ENCODE measurements at regions of chr13 and their contacts with region 1.

Region 1: GRCh38 chr13:51286135-51287002 is 53.1 kb upstream of the SERPINE3 start:
- DNase-seq: peak; percentile 87
- ATAC-seq: peak; percentile 90
- H3K4me3 Mint-ChIP-seq: no peak overlapping the region
- H3K27ac Mint-ChIP-seq: no peak overlapping the region
- H3K4me1 Mint-ChIP-seq: peaks cover 2% of the 10 kb centered on the region
- H3K27me3 Mint-ChIP-seq: no peaks in the 10 kb centered on the region

Region 2: DNA sequence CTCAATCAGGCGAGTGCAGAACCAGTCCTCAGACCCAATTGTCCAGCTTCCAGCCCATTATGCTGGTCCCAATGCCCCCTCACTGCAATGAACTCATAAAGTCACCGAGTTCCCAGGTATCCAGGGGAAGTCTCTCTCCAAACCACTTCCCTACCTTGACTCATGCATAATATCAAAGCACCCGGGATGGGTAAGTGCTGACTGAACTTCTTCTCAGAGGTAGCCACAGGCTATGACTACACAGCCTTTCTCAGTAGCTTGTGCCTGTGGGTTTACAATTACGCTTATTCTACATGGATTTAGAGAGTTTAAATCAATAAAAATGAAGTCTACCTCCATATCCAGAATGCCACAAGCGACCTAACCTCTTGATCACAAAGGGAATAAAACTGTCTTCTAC is 173.6 kb before region 1 on chr13:
- CTCF ChIA-PET with region 1: interaction called, 11 read pairs
- POLR2A ChIA-PET with region 1: no interaction called
- intact Hi-C with region 1: no loop called
- DNase-seq: no peak
- ATAC-seq: peak; percentile 49
- H3K4me3 Mint-ChIP-seq: no peak overlapping the region
- H3K27ac Mint-ChIP-seq: no peak overlapping the region
- H3K4me1 Mint-ChIP-seq: no peaks in the 10 kb centered on the region
- H3K27me3 Mint-ChIP-seq: peaks cover 9% of the 10 kb centered on the region

Region 3: DNA sequence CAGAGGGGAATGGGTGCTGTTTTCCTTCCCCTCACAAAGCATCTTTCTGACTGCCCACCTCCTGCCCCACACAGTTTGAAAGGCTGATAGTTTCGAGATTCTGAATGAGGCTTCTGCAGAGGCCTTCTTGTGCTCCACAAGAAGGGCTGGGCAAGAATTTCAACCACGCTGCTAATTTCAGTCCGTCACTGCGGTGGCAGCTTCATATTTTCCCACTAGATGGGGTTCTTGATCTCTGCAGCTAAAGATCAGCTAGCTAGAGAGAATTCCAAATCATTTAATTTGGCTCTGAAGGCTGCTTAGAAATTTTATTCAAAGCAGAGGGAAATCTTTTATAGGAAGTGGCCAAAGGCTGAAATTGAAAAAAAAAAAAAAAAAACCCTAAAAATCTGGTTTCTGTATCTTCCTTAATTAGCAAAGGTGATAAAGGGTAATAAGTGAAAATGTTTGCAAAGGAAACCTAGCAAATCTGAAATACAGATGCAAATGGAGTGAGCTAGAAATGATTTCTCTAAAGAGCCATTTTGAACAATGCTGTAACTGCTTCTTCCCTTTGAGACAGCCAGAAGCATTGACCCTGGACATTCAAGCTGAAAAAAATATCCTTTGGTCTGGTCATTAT is 137.3 kb before region 1 on chr13:
- CTCF ChIA-PET with region 1: interaction called, 29 read pairs
- POLR2A ChIA-PET with region 1: no interaction called
- intact Hi-C with region 1: loop called in 1 of 2 experiments (anchors 1 kb)
- DNase-seq: peak; percentile 44
- ATAC-seq: no peak
- H3K4me3 Mint-ChIP-seq: no peak overlapping the region
- H3K27ac Mint-ChIP-seq: no peak overlapping the region
- H3K4me1 Mint-ChIP-seq: peaks cover 10% of the 10 kb centered on the region
- H3K27me3 Mint-ChIP-seq: peaks cover 19% of the 10 kb centered on the region

Region 4: DNA sequence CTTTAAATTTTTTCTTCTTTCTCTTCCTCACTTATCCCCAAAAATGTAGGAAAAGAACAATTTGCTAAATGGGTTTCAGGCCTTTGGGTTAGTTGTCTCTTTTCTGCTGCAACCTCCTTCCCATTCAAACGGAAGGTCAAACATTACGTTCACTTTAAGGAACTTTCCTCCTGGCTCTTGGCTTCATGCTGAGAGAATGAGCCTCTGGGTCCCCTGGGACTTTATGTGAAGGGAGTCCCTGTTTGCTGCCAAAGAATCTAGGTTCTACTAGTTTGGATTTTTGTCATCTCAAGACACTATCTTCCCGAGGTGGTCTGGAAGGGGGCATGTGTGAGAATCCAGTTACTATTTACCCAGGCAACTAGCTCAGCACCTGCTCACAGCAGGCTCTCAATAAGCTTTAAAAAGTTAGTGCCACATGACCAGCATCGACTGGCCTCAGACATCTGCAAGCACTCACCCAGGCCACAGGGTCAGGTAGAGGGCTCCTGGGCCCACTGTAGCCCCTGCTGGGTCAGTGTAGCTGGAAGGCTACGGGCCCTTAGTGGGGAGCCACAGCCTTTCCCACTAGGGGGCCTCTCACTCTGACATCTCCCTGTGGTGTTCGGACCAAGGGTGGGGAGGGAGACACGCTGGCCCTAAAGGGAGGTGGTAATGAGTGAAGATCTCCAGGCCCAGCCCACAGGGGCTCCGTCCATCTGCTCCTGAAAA is 23.7 kb before region 1 on chr13:
- CTCF ChIA-PET with region 1: interaction called, 11 read pairs
- POLR2A ChIA-PET with region 1: no interaction called
- intact Hi-C with region 1: no loop called
- DNase-seq: no peak
- ATAC-seq: no peak
- H3K4me3 Mint-ChIP-seq: no peak overlapping the region
- H3K27ac Mint-ChIP-seq: no peak overlapping the region
- H3K4me1 Mint-ChIP-seq: no peaks in the 10 kb centered on the region
- H3K27me3 Mint-ChIP-seq: no peaks in the 10 kb centered on the region

Region 5: DNA sequence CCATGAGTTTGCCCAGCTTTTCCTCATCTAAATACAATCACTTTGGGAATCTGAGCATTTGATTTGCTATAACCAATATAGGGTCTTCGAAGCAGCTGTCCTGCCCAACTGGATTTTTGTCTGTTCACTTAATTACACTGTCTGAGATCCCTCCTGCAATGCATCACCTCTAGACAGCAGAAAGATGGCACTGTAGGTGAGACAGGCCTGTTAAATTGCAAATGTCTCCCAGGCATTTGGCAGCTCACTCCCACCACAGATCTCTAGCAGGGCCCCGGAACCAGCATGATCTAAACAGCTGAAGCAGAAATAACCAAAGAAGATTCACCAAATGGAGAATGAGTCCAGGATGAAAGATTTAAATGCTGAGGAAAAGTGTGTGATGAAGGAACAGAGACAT is 11.2 kb after region 1 on chr13:
- CTCF ChIA-PET with region 1: interaction called, 39 read pairs
- POLR2A ChIA-PET with region 1: no interaction called
- intact Hi-C with region 1: no loop called
- DNase-seq: no peak
- ATAC-seq: no peak
- H3K4me3 Mint-ChIP-seq: no peak overlapping the region
- H3K27ac Mint-ChIP-seq: no peak overlapping the region
- H3K4me1 Mint-ChIP-seq: no peaks in the 10 kb centered on the region
- H3K27me3 Mint-ChIP-seq: peaks cover 2% of the 10 kb centered on the region